Mammary epithelial cell (primary cell): ENCODE measurements at regions of chr6 and their contacts with region 1.

Region 1: DNA sequence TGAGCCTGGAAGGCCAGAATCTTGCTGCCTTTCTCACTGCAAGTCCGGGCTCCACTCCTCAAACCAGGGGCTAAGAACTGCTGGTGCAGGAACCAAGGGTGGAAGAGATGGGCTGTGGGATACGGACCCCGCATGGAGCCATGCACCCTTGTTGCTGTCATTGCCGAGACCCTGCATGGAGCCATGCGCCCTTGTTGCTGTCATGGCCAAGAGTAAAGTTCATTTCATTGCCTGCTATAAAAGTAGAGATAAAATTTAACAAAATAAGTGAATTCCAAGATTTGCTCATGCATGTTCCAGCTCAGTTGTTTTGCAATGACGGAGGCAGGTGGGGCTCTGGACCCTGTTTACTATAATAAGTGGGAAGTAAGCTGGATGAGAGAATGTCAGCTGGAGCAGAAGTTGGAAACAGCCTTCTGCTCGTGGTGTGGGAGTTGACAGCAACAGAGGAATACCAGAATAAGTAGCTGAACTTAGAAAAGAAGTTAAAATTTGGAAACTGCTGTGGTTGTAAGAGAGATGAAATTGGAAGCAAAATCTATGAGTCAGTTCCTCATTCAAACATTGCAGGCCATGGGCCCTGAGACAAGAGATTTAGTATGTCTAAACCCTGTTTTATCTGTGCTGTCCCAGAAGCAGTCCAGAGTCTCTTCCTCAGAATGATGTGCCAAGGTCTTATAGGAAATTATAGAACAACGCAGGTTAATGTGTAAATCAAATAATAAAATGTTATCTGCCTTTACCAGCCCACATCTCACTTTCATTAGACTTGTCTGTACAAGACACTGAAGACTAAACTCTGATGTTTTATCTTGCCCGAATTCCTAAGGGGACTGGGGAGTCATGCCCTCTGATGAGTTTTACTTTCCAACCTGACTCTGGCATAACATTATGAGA is 15.8 kb upstream of the THBS2 start:
- DNase-seq: peak; percentile 72
- H3K4me3 ChIP-seq: no peak overlapping the region
- H3K27ac ChIP-seq: peak overlapping the region; percentile 81
- H3K4me1 ChIP-seq: peaks cover 26% of the 10 kb centered on the region
- H3K27me3 ChIP-seq: no peaks in the 10 kb centered on the region
- CTCF ChIP-seq: no peak

Region 2: GRCh38 chr6:169282043-169282442 is 12.6 kb after region 1 on chr6:
- CTCF ChIA-PET with region 1: no interaction called
- dilution Hi-C with region 1: no loop called
- in situ Hi-C with region 1: no loop called
- intact Hi-C with region 1: no loop called
- DNase-seq: no peak
- H3K4me3 ChIP-seq: no peak overlapping the region
- H3K27ac ChIP-seq: no peak overlapping the region
- H3K4me1 ChIP-seq: no peaks in the 10 kb centered on the region
- H3K27me3 ChIP-seq: no peaks in the 10 kb centered on the region
- CTCF ChIP-seq: no peak

Region 3: GRCh38 chr6:169292338-169293124 is 23.1 kb after region 1 on chr6:
- CTCF ChIA-PET with region 1: no interaction called
- dilution Hi-C with region 1: no loop called
- in situ Hi-C with region 1: no loop called
- intact Hi-C with region 1: loop called (anchors 1 kb)
- DNase-seq: peak; percentile 91
- H3K4me3 ChIP-seq: no peak overlapping the region
- H3K27ac ChIP-seq: peak overlapping the region; percentile 50
- H3K4me1 ChIP-seq: peaks cover 67% of the 10 kb centered on the region
- H3K27me3 ChIP-seq: no peaks in the 10 kb centered on the region
- CTCF ChIP-seq: no peak

Region 4: GRCh38 chr6:169503422-169504152 is 234.2 kb after region 1 on chr6:
- CTCF ChIA-PET with region 1: no interaction called
- dilution Hi-C with region 1: no loop called
- in situ Hi-C with region 1: no loop called
- intact Hi-C with region 1: no loop called
- DNase-seq: no peak
- H3K4me3 ChIP-seq: no peak overlapping the region
- H3K27ac ChIP-seq: no peak overlapping the region
- H3K4me1 ChIP-seq: no peaks in the 10 kb centered on the region
- H3K27me3 ChIP-seq: no peaks in the 10 kb centered on the region
- CTCF ChIP-seq: no peak